ENCODE measurements at regions of chr21 and their contacts with region 1.

Region 1: DNA sequence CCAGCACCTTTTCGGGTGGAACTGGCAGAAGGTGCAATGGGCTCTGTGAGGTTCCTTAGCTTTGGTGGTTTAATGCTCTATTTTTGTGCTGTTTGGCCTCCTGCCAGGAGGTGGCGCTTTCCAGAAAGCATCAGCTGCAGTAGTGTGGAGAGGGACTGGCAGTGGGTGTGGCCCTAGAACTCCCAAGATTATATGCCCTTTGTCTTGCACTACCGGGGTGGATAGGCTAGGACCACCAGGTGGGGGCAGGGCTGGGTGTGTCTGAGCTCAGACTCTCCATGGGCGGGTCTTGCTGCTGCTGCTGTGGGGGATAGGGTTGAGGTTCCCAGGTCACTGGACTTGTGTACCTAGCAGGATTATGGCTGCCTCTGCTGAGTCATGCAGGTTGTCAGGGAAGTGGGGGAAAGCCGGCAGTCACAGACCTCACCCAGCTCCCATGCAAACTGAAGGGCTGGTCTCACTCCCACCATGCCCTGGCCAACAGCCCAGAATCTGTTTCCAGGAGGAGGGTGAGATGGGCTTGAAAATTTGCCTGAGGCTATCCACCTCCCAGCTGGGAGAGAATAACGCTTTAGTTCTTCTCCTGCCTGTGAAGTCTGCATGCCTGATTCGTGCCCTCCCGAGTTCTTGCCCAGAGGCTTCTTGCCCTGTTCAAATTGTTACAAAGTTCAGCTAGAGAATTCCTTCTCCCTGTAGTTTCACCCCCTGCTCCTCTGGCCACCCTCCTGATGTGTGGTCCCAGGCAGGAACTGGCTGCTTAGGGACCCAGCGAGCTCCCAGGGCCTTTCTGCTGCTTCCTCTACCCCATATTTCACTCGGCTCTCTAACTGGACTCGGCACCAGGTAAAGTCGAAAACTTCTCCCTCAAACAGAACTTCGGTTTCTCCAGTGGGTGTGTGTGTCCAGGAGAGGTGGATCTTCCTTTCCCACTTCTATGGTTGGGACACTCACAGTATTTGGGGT is 76.5 kb upstream of the BTG3 start:
- DNase-seq: peak; percentile 35 to 59 (median 43)
- H3K4me3 ChIP-seq: no peak overlapping the region
- H3K4me3 Mint-ChIP-seq: peak overlapping the region in 4 of 8 donors; percentile 9 to 35 (median 20)
- H3K27ac ChIP-seq: no peak overlapping the region
- H3K27ac Mint-ChIP-seq: peak overlapping the region in 4 of 7 donors; percentile 18 to 66 (median 52)
- H3K4me1 ChIP-seq: peaks cover 27% of the 10 kb centered on the region
- H3K4me1 Mint-ChIP-seq: peaks cover 29 to 51% (median 39%) of the 10 kb centered on the region in 4 donors
- H3K27me3 ChIP-seq: no peaks in the 10 kb centered on the region
- H3K27me3 Mint-ChIP-seq: no peaks in the 10 kb centered on the region

Region 2: DNA sequence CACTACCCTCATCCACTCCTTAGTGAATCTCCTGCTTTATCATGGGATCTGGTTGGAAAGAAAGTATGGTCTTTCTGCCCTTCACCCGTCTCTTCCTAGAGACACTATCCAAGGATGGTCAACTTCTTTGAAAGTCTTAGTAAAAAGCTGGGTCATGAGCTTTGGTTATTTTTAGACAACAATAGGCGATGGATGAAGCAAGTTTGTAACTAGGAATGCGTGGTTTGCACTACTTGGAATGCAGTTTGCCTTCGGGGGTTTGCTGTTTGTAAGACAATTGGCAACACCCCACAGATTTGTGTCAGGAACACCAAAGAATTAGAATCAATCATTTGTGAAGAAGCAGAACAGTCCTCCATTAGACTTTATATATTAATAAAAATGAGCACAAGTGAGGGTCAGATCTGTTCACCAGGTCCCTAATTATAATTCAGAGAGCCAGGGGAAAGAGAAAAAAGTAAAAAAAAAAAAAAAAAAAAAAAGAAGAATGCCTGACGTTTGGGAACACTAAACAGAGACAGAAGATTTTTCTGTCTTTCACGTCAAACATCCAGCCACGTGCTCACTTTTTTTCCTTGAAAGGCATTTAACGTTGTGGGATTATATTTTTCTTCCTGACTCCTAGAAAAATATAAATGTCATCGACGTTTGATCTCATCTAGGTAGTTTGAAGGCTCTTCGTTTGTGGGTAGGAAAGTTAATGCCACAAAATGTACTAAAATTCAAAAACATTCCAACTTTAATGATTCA is 15.8 kb before region 1 on chr21:
- CTCF ChIA-PET with region 1: interaction called, 26 read pairs
- POLR2A ChIA-PET with region 1: no interaction called
- intact Hi-C with region 1: no loop called
- DNase-seq: no peak
- H3K4me3 ChIP-seq: no peak overlapping the region
- H3K4me3 Mint-ChIP-seq: no peak overlapping the region
- H3K27ac ChIP-seq: no peak overlapping the region
- H3K27ac Mint-ChIP-seq: no peak overlapping the region
- H3K4me1 ChIP-seq: no peaks in the 10 kb centered on the region
- H3K4me1 Mint-ChIP-seq: no peaks in the 10 kb centered on the region
- H3K27me3 ChIP-seq: no peaks in the 10 kb centered on the region
- H3K27me3 Mint-ChIP-seq: peaks cover 0 to 7% of the 10 kb centered on the region in 2 donors

Region 3: DNA sequence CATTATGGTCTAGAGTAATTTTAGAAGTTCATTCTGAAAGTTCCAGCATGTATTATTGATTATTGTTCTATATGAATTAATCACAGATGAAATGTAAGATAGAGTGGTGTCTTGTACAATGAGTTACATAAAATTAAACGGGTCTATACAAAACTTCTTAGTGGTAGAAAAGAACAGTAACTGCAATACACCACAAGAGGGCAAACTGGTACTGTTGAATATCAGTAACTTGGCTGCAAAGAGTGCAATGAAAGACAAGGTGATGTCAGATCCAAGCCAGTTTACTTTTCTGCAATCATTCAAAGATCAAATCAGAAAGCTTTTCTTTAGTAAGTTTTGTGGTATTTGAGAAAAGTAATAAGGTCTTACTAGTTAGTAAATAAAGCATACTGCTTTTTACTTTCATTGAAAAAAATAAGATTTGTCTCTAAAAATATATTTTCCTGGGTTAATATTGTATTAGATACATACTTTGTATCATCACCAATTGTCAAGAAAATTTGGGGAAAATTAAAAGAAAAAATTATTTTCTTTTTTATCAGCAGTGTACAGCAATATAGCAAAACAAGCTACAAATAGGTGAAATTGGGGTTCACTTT is 10.1 kb before region 1 on chr21:
- CTCF ChIA-PET with region 1: interaction called, 26 read pairs
- POLR2A ChIA-PET with region 1: no interaction called
- intact Hi-C with region 1: no loop called
- DNase-seq: peak; percentile 40 to 70 (median 66)
- H3K4me3 ChIP-seq: no peak overlapping the region
- H3K4me3 Mint-ChIP-seq: no peak overlapping the region
- H3K27ac ChIP-seq: no peak overlapping the region
- H3K27ac Mint-ChIP-seq: no peak overlapping the region
- H3K4me1 ChIP-seq: no peaks in the 10 kb centered on the region
- H3K4me1 Mint-ChIP-seq: no peaks in the 10 kb centered on the region
- H3K27me3 ChIP-seq: no peaks in the 10 kb centered on the region
- H3K27me3 Mint-ChIP-seq: no peaks in the 10 kb centered on the region